ENCODE measurements at regions of chr4 and their contacts with region 1.

Region 1: GRCh38 chr4:165096776-165097175 is 15.9 kb downstream of the TMEM192 start:
- DNase-seq: no peak
- H3K4me3 ChIP-seq: no peak overlapping the region
- H3K27ac ChIP-seq: no peak overlapping the region
- H3K27me3 ChIP-seq: no peaks in the 10 kb centered on the region
- CTCF ChIP-seq: peak; percentile 61

Region 2: GRCh38 chr4:164768516-164768915 is 328.3 kb before region 1 on chr4:
- CTCF ChIA-PET with region 1: interaction called, 55 read pairs
- POLR2A ChIA-PET with region 1: no interaction called
- DNase-seq: no peak
- H3K4me3 ChIP-seq: no peak overlapping the region
- H3K27ac ChIP-seq: no peak overlapping the region
- H3K27me3 ChIP-seq: no peaks in the 10 kb centered on the region
- CTCF ChIP-seq: peak; percentile 32

Region 3: GRCh38 chr4:164779811-164780216 is 317.0 kb before region 1 on chr4:
- CTCF ChIA-PET with region 1: interaction called, 46 read pairs
- POLR2A ChIA-PET with region 1: no interaction called
- DNase-seq: no peak
- H3K4me3 ChIP-seq: no peak overlapping the region
- H3K27ac ChIP-seq: no peak overlapping the region
- H3K27me3 ChIP-seq: no peaks in the 10 kb centered on the region
- CTCF ChIP-seq: peak; percentile 71

Region 4: DNA sequence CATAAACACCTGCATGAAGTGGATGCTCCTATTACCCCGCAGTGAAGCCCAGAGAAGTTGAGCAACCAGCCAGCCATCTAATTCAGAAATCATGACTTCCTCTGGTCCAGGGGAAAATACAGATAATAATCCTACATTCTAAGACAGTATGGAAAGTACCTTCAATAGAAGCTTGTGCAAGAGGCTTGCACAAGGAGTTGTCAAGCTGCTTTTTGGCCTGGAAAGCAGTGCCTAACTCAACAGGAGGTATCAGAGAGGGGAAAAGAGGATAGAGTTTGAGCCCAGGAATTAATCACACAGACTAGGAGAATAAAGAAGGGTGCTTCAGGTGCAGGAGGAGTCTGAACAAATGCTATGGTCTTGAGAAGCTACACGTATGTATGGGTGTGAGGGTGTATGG is 10.8 kb before region 1 on chr4:
- CTCF ChIA-PET with region 1: interaction called, 14 read pairs
- POLR2A ChIA-PET with region 1: no interaction called
- DNase-seq: no peak
- H3K4me3 ChIP-seq: no peak overlapping the region
- H3K27ac ChIP-seq: no peak overlapping the region
- H3K27me3 ChIP-seq: no peaks in the 10 kb centered on the region
- CTCF ChIP-seq: no peak